Endothelial cell of umbilical vein (primary cell): ENCODE measurements at regions of chr6 and their contacts with region 1.

Region 1: DNA sequence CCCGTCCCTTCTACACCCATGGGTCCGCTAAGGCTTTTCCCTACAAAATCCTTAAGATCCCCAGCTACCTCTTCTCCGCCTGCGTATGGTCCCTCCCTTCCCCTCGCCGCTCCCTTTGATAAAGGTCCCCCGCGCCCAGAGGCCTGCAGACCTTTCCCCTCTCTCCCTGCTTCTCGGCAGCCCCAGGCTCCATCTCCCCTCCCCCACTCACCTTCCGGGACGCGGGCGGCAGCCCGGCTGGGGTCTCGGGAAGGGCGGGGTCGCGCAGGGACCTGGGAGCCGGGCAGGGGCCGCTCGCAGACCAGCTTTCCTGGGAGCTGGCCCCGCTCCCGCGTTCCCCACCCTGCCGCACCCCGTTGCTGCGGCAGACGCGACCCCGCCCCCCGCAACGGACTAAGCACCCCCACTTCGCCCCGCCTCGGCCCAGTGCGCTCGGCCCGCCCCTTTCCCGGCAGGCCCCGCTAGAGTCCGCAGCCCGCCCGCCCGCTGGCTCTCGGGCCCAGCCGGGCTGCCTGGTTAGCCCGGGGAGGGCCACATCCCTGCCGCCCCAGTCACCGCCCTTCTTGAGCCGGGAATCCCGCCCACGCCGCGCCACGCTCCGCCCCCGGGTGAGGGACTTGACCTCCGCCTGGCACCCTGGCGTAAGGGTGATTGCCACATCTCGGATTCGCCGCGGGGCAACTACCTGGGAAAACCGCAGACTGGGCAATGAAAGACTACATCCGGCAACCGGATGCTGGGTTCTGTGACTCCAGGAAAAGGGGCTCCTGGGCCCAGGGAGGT is at the start of gene FLOT1:
- DNase-seq: peak; percentile 94
- H3K4me3 ChIP-seq: peak within 1 kb of the TSS; percentile 37 to 83 (median 80)
- H3K27ac ChIP-seq: peak within 1 kb of the TSS; percentile 89
- H3K4me1 ChIP-seq: peaks cover 47% of the 10 kb centered on the region
- H3K27me3 ChIP-seq: no peaks in the 10 kb centered on the region
- CTCF ChIP-seq: no peak
- POLR2A ChIP-seq: peak; percentile 83
- total RNA-seq, gene FLOT1: 141 and 145 TPM in 2 replicates

Region 2: DNA sequence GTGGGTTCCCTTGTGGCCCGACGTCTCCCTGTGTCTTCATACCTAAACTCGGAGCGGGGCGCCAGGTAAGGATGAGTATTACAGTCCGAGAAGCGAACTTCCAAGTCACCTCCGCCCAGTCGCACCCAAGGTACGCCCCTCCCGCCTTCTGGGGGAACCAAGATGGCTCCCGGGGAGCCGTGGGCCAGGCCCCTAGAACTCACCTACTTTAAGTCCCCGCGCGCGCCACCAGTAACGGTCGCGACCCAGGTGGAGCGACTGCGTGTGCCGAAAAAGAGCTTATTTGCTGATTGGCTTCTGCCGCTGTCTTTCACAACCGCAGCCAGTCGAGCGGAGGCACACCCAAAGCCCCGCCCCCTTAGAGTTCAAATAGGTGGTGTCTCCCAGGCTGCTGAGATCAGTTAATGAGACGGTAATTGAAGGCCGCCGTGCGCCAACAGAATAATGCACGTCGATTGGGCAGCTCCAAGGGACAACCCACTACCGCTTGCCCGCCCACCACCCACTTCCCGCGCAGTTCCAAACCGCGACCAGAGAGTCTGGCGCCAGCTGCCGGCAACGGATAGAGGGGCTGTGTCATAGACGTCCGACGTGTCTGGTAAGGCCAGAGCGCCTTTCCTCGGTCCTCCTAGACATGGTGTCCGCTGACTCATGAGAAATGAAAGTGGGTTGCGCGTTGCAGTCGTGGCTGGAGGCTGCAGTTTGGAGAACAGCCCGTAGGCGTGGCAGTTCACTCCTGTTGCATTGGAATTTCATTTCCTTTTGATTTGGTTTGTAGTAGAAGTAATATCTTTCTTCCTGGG is 25.3 kb before region 1 on chr6 and contains the start of gene MDC1:
- CTCF ChIA-PET with region 1: interaction called, 8 read pairs
- POLR2A ChIA-PET with region 1: interaction called, 3 read pairs
- dilution Hi-C with region 1: no loop called
- intact Hi-C with region 1: loop called (anchors 1 kb)
- DNase-seq: peak; percentile 100
- H3K4me3 ChIP-seq: peak within 1 kb of the TSS; percentile 7 to 80 (median 72)
- H3K27ac ChIP-seq: peak within 1 kb of the TSS; percentile 82
- H3K4me1 ChIP-seq: peaks cover 23% of the 10 kb centered on the region
- H3K27me3 ChIP-seq: no peaks in the 10 kb centered on the region
- CTCF ChIP-seq: peak in 1 of 2 donors; percentile 34
- POLR2A ChIP-seq: peak; percentile 82
- total RNA-seq, gene MDC1: 42.3 and 43.6 TPM in 2 replicates

Region 3: DNA sequence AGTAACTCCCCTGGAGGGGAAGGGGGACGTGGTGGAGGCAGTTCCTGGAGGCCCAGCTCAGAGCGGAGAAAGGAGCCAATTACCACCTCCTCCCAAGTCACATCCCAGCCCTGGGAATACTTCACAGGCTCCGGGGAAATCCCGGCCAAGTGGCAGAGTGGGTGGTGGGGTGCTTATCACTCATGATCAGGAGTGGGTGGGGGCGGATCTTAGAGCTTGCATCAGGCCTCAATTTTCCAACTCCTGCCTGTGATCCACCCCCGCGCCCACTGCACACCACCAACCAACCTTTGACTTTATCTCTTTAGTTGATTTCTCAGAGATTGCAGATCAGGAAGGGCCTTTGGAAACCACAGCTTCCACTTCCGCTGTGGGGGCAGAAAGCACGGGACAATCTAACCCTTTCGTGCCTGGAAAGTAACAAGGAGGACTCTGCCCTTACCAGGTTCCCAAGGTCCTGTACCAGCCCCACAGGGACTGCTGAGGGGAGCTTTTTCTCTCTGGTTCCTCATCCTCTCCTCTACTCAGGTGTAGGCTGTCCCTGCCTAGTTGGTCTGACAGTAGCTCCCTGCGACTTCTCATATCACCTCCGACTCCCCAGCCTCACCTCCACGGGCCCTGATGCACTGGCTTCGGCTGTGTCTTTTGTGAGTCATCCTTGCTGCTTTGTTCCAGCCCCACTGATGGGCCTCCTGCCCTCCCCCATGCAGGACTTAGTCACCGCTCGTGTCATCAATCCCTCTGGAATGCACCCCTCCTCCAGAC is 26.8 kb after region 1 on chr6:
- CTCF ChIA-PET with region 1: interaction called, 6 read pairs
- POLR2A ChIA-PET with region 1: interaction called, 11 read pairs
- dilution Hi-C with region 1: no loop called
- intact Hi-C with region 1: no loop called
- DNase-seq: peak; percentile 94
- H3K4me3 ChIP-seq: peak overlapping the region in 1 of 3 experiments; percentile 35
- H3K27ac ChIP-seq: peak overlapping the region; percentile 96
- H3K4me1 ChIP-seq: peaks cover 29% of the 10 kb centered on the region
- H3K27me3 ChIP-seq: no peaks in the 10 kb centered on the region
- CTCF ChIP-seq: no peak
- POLR2A ChIP-seq: peak; percentile 63

Region 4: GRCh38 chr6:30814136-30815040 is 71.9 kb after region 1 on chr6:
- CTCF ChIA-PET with region 1: interaction called, 10 read pairs
- POLR2A ChIA-PET with region 1: interaction called, 8 read pairs
- dilution Hi-C with region 1: no loop called
- intact Hi-C with region 1: loop called (anchors 1 kb)
- DNase-seq: peak; percentile 92
- H3K4me3 ChIP-seq: no peak overlapping the region
- H3K27ac ChIP-seq: peak overlapping the region; percentile 93
- H3K4me1 ChIP-seq: peaks cover 37% of the 10 kb centered on the region
- H3K27me3 ChIP-seq: no peaks in the 10 kb centered on the region
- CTCF ChIP-seq: no peak
- POLR2A ChIP-seq: no peak

Region 5: DNA sequence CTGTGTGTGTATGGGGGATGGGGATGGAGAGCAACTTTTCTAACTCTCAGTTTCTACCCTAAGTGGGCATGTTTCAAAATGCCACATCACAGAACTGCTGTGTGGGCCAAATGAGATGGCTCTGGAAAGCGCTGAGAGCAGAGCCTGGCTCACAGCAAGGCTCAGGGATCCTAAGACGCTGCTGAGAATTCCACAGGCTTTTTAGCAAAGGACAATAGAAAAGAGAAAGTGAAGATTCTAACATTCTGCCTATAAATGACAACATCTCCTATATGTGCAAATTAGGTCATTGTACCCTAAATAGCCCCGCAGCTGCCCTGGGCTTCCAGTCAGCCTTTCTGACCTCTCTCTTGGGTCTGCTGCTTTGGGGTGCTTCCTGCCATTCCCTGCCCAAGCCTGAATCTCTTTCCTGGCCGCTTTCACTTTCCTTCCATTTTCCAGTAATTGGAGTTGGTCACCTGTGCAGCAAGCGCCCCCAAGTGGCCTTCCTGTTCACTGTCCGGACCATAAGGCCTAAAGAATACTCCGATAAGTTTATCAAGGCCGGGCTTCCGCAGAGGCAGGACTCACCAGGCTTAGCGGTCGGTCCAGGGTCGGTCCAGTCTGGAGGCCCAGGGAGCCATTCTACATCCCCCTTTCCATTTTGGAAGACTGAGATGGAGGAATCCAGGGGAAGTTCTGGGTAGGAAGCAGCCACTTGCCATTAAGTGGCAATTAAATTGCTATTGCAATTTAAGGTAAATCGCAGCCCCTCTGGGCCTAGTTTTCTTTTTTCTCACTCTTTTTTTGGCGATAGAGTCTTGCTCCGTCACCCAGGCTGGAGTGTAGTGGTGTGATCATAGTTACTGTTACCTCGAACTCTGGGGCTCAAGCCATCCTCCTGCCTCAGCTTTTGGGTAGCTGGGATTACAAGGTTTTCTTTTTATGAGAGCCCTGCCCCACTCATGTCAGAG is 135.2 kb after region 1 on chr6:
- CTCF ChIA-PET with region 1: no interaction called
- POLR2A ChIA-PET with region 1: no interaction called
- dilution Hi-C with region 1: loop called (anchors 25 kb)
- intact Hi-C with region 1: loop called (anchors 1 kb)
- DNase-seq: peak; percentile 92
- H3K4me3 ChIP-seq: peak overlapping the region in 2 of 3 experiments; percentile 9 to 31
- H3K27ac ChIP-seq: peak overlapping the region; percentile 81
- H3K4me1 ChIP-seq: peaks cover 23% of the 10 kb centered on the region
- H3K27me3 ChIP-seq: peaks cover 0 to 2% of the 10 kb centered on the region in 2 experiments
- CTCF ChIP-seq: peak; percentile 83 to 90
- POLR2A ChIP-seq: peak; percentile 49